ENCODE measurements at regions of chr4 and their contacts with region 1.

Region 1: DNA sequence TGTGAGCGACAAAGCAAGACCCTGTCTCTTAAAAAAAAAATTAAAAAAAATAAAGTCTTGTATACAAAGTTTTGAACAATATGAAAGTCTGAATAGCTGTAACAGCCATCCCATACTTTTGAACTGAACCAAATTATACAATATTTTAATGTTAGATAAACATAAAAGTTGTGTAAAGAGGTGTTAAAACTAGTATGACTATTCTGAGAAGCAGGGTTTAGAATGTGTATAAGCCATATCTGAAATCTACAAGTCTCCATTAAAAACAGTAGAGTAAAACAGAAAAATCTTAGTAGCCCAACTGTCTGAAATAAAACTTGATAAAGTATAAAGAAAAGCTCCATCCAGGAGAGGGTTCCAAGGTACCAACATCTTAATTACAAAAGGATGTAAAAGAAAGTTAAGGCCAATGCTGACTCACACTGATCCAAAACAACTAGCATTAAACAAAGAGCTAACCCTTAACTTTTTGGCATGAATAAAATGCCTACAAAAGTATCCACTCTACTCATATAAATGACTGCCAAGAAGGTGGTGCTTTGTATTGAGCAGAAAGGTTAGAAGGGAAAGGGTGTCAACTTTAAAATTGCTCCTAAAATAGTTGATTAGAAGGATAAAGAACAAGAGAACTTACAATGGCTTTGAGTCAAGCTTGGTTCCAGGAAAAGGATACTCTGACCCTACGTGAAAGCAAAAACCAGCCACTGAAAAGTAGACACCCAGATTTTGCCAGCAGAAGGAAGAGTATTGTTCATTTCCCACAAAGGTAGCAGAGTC is 18.5 kb downstream of the CNOT6L start:
- DNase-seq: no peak
- ATAC-seq: peak; percentile 14 to 27 (median 17)
- H3K4me3 ChIP-seq: no peak overlapping the region
- H3K4me3 Mint-ChIP-seq: peak overlapping the region; percentile 54
- H3K27ac ChIP-seq: peak overlapping the region; percentile 37
- H3K27ac Mint-ChIP-seq: peak overlapping the region; percentile 77 to 93
- H3K4me1 ChIP-seq: peaks cover 41% of the 10 kb centered on the region
- H3K4me1 Mint-ChIP-seq: peaks cover 80 to 83% of the 10 kb centered on the region in 2 donors
- H3K27me3 ChIP-seq: no peaks in the 10 kb centered on the region
- H3K27me3 Mint-ChIP-seq: no peaks in the 10 kb centered on the region
- CTCF ChIP-seq: no peak

Region 2: DNA sequence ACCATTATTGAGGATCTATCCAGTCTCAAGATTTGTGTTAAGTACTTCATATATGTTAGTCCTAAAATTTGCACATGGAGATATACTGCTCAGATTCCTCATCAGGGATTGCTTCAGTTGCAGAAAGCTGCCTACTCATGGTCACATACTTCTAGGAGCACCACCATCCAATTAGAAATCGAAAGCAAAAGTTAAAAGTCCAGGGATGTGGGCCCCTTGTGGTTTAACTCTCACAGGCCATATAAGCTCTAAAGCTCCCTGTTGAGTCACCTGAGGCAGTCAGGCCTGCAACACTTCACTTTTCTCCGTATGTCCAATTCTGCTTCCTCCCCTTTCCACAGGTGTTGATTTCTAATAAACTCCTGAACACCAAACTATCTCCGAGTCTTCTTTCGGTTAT is 65.7 kb before region 1 on chr4:
- intact Hi-C with region 1: loop called (anchors 5 kb)
- DNase-seq: peak; percentile 19 to 69
- ATAC-seq: peak; percentile 89 to 96 (median 91)
- H3K4me3 ChIP-seq: no peak overlapping the region
- H3K4me3 Mint-ChIP-seq: peak overlapping the region; percentile 84
- H3K27ac ChIP-seq: peak overlapping the region; percentile 47
- H3K27ac Mint-ChIP-seq: peak overlapping the region; percentile 87 to 89
- H3K4me1 ChIP-seq: peaks cover 3% of the 10 kb centered on the region
- H3K4me1 Mint-ChIP-seq: peaks cover 43 to 66% of the 10 kb centered on the region in 2 donors
- H3K27me3 ChIP-seq: no peaks in the 10 kb centered on the region
- H3K27me3 Mint-ChIP-seq: no peaks in the 10 kb centered on the region
- CTCF ChIP-seq: no peak

Region 3: GRCh38 chr4:77758804-77759203 is 41.9 kb before region 1 on chr4:
- intact Hi-C with region 1: loop called (anchors 5 kb)
- DNase-seq: no peak
- ATAC-seq: peak in 2 of 3 donors; percentile 55 to 64
- H3K4me3 ChIP-seq: no peak overlapping the region
- H3K4me3 Mint-ChIP-seq: peak overlapping the region; percentile 7
- H3K27ac ChIP-seq: no peak overlapping the region
- H3K27ac Mint-ChIP-seq: peak overlapping the region; percentile 73 to 77
- H3K4me1 ChIP-seq: no peaks in the 10 kb centered on the region
- H3K4me1 Mint-ChIP-seq: peaks cover 40 to 52% of the 10 kb centered on the region in 2 donors
- H3K27me3 ChIP-seq: no peaks in the 10 kb centered on the region
- H3K27me3 Mint-ChIP-seq: no peaks in the 10 kb centered on the region
- CTCF ChIP-seq: no peak

Region 4: DNA sequence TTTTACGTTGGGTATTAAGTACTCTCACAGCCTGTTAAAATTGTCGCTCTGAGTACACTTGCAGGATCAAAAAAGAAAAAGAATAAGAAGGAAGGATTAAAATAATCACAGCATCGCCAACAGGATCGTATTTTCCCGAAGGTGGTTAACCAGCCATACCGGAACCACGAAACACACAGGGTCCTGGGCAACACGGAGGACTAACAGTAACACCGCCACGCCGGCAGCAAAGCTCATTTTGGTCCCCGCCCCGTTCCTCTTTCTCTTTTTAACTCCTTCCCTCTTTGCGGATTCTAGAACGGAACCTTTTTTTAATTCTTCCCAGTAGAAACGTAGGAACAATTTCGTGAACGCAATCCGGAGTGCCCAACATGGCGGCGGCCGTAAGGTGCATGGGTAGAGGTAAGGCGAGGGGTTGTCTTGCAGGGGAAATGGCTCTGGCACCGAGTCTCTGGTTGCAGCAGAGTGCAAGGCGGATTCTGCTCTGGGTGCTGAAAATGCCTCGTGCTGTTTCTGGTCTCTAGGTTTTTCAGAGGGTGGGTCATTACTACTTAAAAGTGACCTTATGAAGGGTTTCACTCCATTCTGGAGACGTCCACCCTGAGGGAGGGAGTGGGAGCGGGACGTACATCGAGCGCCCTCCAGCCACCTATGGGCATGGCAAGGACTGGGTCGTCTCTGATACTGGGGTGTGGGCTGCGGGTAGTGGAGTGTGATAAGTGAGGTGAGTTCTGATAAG is 62.0 kb after region 1 on chr4 and contains the start of gene MRPL1:
- intact Hi-C with region 1: no loop called
- DNase-seq: peak; percentile 80 to 96
- ATAC-seq: peak; percentile 66 to 89 (median 76)
- H3K4me3 ChIP-seq: peak within 1 kb of the TSS; percentile 97
- H3K4me3 Mint-ChIP-seq: peak within 1 kb of the TSS; percentile 94
- H3K27ac ChIP-seq: peak within 1 kb of the TSS; percentile 100
- H3K27ac Mint-ChIP-seq: peak within 1 kb of the TSS; percentile 96 to 100
- H3K4me1 ChIP-seq: peaks cover 20% of the 10 kb centered on the region
- H3K4me1 Mint-ChIP-seq: peaks cover 53 to 64% of the 10 kb centered on the region in 2 donors
- H3K27me3 ChIP-seq: no peaks in the 10 kb centered on the region
- H3K27me3 Mint-ChIP-seq: no peaks in the 10 kb centered on the region
- CTCF ChIP-seq: no peak
- total RNA-seq, gene MRPL1: 17.9 to 22.9 (median 22.9) TPM

Region 5: GRCh38 chr4:77994194-77994721 is 193.6 kb after region 1 on chr4:
- intact Hi-C with region 1: no loop called
- DNase-seq: peak in 1 of 2 donors; percentile 26
- ATAC-seq: peak in 1 of 3 donors; percentile 42
- H3K4me3 ChIP-seq: no peak overlapping the region
- H3K4me3 Mint-ChIP-seq: no peak overlapping the region
- H3K27ac ChIP-seq: no peak overlapping the region
- H3K27ac Mint-ChIP-seq: no peak overlapping the region
- H3K4me1 ChIP-seq: no peaks in the 10 kb centered on the region
- H3K4me1 Mint-ChIP-seq: no peaks in the 10 kb centered on the region
- H3K27me3 ChIP-seq: no peaks in the 10 kb centered on the region
- H3K27me3 Mint-ChIP-seq: peaks cover 4 to 14% of the 10 kb centered on the region in 2 donors
- CTCF ChIP-seq: no peak

Measured in natural killer cell (primary cell).